Thyroid gland (tissue), 4 donors: ENCODE measurements at regions of chr4 and their contacts with region 1.

Region 1: DNA sequence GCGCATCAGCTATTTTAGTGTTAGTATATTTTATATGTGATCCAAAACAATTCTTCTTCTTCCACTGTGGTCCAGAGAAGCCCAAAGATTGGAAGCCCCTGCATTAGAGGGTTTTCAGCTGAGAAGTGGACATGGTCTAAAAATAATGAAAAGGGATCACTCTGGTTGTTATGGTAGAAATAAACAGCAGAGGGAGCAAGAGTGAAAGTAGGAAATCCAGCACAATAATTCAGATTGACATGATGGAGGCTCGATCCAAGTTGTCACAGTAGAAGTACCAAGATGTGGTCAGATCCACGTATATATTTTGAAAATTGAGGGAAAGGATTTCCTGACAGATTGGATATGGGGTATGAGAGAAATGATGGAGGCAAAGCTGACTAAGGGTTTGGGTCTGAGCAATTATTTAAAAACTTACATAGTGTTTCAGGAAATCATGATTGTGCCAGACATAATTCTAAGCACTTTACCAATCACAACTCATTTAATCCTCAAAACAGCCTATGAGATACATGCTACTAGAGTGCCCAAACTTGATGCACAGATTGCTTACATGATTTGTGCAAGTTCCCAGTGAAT is 17.0 kb upstream of the TMEM144 start:
- DNase-seq: no peak
- H3K4me3 ChIP-seq: no peak overlapping the region
- H3K27ac ChIP-seq: peak overlapping the region; percentile 29 to 65 (median 40)
- H3K4me1 ChIP-seq: peaks cover 4 to 8% of the 10 kb centered on the region in 2 donors
- H3K27me3 ChIP-seq: no peaks in the 10 kb centered on the region
- CTCF ChIP-seq: peak; percentile 16 to 77 (median 62)
- POLR2A ChIP-seq: no peak

Region 2: GRCh38 chr4:158253350-158253980 is 60.2 kb after region 1 on chr4:
- intact Hi-C with region 1: loop called (anchors 10 kb)
- DNase-seq: peak; percentile 23 to 34
- H3K4me3 ChIP-seq: no peak overlapping the region
- H3K27ac ChIP-seq: no peak overlapping the region
- H3K4me1 ChIP-seq: no peaks in the 10 kb centered on the region
- H3K27me3 ChIP-seq: no peaks in the 10 kb centered on the region
- CTCF ChIP-seq: peak; percentile 22 to 65 (median 42)
- POLR2A ChIP-seq: no peak

Region 3: DNA sequence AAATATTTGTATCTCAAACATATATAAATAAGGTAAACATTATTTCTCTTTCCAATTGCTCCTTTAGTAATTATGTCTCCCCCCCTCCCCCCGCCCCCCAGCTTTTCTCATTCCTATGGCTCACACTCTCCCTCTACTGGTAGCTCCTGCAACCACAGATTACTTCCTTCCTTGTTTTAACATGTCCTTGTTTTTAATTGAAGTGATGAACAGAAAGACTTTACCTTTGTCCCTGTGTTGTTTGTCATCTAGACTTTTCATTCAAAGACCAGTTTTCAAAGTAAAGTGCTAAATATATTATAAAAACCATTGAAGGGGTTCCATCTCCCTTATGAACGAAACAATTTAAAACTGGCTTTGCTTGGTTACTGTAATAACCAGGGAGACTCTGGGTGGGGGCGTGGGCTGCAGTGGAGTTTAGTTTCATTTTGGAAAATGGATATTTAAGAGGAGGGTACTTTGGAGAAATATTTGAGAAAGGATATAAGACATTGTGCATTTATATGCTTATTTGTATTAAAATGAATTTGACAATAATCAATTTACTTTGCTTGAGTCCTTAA is 1262.5 kb after region 1 on chr4:
- intact Hi-C with region 1: no loop called
- DNase-seq: peak; percentile 10 to 11
- H3K4me3 ChIP-seq: no peak overlapping the region
- H3K27ac ChIP-seq: no peak overlapping the region
- H3K4me1 ChIP-seq: peaks cover 0 to 8% of the 10 kb centered on the region in 2 donors
- H3K27me3 ChIP-seq: no peaks in the 10 kb centered on the region
- CTCF ChIP-seq: peak in 5 of 6 experiments; percentile 12 to 69 (median 50)
- POLR2A ChIP-seq: no peak